AG04449 (cell line): ENCODE measurements at regions of chr2 and their contacts with region 1.

Region 1: GRCh38 chr2:186503848-186504606 is 18.0 kb downstream of the ZC3H15 start:
- DNase-seq: no peak
- H3K4me3 ChIP-seq: no peak overlapping the region
- CTCF ChIP-seq: no peak

Region 2: DNA sequence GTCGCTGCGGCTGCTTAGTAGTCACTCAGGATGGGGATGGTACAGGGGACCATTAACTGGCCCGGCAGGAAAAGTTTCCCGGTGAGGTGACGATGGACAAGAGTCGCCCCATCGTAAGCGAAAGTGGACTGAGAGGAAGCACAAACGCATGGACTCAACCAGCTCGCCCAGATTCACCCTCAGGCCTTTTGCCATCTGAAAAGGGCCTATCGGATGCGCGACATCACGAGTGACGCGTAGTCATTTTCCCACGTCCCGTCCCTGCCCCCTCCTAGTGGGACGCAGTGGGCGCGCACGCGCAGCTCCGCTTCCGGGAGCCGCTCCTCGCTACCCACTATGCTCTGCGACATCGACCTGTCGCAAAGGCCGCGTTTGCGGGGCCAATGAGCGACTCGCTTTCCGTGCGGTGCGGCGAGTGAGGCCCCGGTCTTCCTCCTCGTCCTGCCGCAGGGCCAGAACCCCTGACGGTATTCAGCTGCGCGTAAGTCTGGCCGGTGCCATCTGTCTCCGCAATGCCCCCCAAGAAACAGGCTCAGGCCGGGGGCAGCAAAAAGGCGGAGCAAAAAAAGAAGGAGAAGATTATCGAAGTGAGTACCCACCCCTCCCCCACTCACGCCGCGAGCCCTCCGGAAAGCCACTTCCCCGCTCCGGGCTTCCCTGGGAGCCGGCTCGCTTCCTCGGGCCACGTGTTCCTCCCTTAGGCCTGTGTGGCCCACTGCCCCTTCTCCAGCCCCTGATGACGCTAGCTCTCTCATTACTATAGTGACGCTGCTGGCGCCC is 18.0 kb before region 1 on chr2 and contains the start of gene ZC3H15:
- CTCF ChIA-PET with region 1: interaction called, 39 read pairs
- POLR2A ChIA-PET with region 1: interaction called, 3 read pairs
- DNase-seq: peak; percentile 92
- H3K4me3 ChIP-seq: peak within 1 kb of the TSS; percentile 82
- CTCF ChIP-seq: no peak

Region 3: GRCh38 chr2:186612555-186613440 is 108.8 kb after region 1 on chr2:
- CTCF ChIA-PET with region 1: interaction called, 11 read pairs
- POLR2A ChIA-PET with region 1: no interaction called
- DNase-seq: no peak
- H3K4me3 ChIP-seq: no peak overlapping the region
- CTCF ChIP-seq: no peak

Region 4: DNA sequence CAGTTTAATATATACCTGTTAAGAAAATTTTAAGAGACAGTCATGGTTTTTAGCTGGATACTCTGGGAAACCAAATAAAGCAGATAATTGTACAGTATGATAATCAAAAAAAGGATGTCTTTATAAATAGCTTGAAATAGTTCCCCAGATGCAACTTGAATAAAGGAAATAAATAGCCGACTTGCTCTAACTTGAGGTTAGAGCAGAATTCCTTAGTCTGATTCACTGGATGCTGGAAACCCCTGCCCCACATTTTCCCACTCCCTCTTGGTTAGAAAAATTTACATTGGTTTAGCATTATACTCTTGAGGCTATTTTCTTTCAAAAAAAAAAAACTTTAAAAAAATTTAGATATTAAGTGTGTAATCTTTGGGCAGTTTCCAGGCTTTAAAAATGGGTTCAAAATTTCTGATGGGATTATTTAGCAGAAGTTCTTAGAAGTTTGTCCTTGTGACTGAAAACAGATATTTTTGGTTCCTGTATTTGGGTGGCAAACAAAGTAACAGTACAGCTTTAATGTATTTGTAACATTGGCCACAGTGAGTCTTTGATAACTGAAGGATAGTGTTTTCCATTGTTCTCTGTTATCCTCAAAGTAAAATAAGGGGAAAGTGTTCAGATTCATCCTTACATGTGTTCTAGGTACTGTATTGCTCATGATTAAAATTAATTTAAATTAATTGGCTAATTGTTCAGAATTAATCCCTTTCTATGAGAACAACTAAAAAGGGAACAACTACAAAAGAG is 125.4 kb after region 1 on chr2:
- CTCF ChIA-PET with region 1: interaction called, 347 read pairs
- POLR2A ChIA-PET with region 1: no interaction called
- DNase-seq: no peak
- H3K4me3 ChIP-seq: no peak overlapping the region
- CTCF ChIP-seq: no peak

Region 5: DNA sequence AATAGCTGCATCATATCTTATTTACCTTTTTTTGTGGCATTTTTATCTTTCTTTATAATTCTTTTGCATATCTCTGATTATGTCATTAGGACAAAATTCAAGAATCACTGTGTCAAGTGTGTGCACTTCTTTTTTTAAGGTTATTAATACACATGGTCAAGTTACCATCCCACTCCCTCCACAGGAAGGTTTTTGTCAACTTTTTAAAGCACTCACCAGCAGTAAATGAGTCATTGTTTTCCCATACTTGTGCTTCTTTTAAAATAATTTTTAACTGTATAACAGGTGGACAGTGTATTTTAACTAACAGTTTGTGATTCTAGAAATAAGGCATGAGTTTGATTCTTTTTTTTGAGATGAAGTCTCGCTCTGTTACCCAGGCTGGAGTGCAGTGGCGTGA is 144.1 kb after region 1 on chr2:
- CTCF ChIA-PET with region 1: interaction called, 347 read pairs
- POLR2A ChIA-PET with region 1: no interaction called
- DNase-seq: no peak
- H3K4me3 ChIP-seq: no peak overlapping the region
- CTCF ChIP-seq: no peak

Region 6: DNA sequence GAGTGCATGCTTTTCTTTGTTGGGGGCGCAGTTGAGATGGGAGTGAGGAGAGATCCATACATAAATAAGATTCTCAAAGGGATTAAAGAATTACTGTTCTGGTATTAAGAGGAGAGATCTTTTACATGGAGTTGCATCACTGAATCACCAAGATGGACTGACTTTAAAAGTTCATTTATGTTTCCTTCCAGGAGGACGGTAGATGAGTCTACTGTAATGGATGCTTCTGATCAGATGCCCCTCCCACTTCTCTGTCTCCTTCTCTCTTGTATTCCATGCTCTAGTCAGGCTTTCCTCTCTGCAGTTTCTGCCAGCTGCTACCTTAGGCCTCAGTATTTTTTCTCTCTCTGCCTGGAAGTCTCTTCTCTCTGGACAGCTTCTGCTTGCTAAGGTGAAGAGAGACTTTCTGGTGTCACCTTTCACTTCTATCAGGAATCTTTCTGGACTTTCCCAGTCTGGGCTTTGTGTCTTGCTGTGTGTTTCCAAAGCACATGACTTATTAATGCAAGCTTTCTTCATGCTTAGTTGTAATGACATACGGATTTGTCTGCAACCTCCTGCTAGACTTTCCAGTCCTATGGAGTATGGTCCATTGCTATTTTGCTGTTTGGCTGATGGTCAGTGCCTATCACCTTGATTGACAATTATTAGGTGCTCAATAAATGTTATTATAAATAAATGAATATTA is 213.4 kb after region 1 on chr2:
- CTCF ChIA-PET with region 1: no interaction called
- POLR2A ChIA-PET with region 1: no interaction called
- DNase-seq: no peak
- H3K4me3 ChIP-seq: no peak overlapping the region
- CTCF ChIP-seq: no peak

Region 7: DNA sequence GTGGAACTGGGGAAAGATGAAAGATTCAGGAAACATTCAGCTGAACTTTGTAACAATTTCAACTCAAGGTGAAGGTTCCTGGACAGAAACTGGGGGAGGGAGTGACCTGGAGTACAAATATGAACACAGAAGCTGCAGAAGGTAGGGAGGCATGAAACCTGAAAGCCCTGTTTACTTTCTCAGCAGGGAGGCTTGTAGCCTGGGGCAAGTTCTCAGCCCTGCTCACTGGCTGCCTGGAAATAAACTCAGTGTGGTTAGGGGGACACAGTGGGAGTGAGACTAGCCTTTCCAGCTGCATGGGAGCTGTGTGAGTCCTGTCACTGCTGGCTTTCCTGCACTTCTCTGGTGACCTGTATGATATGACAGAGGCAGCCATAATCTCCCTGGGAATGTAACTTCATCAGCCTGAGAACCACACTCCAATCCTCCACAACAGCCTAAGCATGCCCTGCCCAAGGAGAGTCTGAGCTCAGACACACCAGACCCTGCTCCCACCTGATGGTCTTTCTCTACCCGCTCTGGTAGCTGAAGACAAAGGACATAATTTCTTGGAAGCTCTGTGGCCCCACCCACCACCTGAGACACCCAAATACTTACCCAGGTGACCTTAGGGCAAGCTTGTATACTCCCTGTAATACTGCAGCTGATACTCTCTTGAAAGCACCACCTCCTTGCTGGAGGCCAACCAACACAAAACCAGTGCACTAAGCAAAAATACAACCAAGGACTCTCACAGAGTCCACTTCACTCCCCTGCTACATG is 268.0 kb after region 1 on chr2:
- CTCF ChIA-PET with region 1: no interaction called
- POLR2A ChIA-PET with region 1: no interaction called
- DNase-seq: no peak
- H3K4me3 ChIP-seq: no peak overlapping the region
- CTCF ChIP-seq: no peak